WTC11 (cell line): ENCODE measurements at regions of chr7 and their contacts with region 1.

Region 1: GRCh38 chr7:105769901-105770628 is 106.3 kb downstream of the ATXN7L1 start:
- DNase-seq: no peak
- ATAC-seq: no peak
- H3K4me3 Mint-ChIP-seq: no peak overlapping the region
- H3K27ac Mint-ChIP-seq: no peak overlapping the region
- H3K4me1 Mint-ChIP-seq: peaks cover 90% of the 10 kb centered on the region
- H3K27me3 Mint-ChIP-seq: no peaks in the 10 kb centered on the region
- CTCF ChIP-seq: no peak

Region 2: GRCh38 chr7:105743351-105744090 is 26.5 kb before region 1 on chr7:
- CTCF ChIA-PET with region 1: interaction called, 13 read pairs
- POLR2A ChIA-PET with region 1: no interaction called
- DNase-seq: no peak
- ATAC-seq: peak; percentile 52
- H3K4me3 Mint-ChIP-seq: no peak overlapping the region
- H3K27ac Mint-ChIP-seq: no peak overlapping the region
- H3K4me1 Mint-ChIP-seq: peaks cover 38% of the 10 kb centered on the region
- H3K27me3 Mint-ChIP-seq: no peaks in the 10 kb centered on the region
- CTCF ChIP-seq: no peak

Region 3: GRCh38 chr7:105759670-105760550 is 10.2 kb before region 1 on chr7:
- CTCF ChIA-PET with region 1: interaction called, 28 read pairs
- POLR2A ChIA-PET with region 1: interaction called, 4 read pairs
- DNase-seq: peak; percentile 38
- ATAC-seq: no peak; the same call in 1 of the 2 replicates
- H3K4me3 Mint-ChIP-seq: no peak overlapping the region
- H3K27ac Mint-ChIP-seq: peak overlapping the region; percentile 61
- H3K4me1 Mint-ChIP-seq: peaks cover 38% of the 10 kb centered on the region
- H3K27me3 Mint-ChIP-seq: no peaks in the 10 kb centered on the region
- CTCF ChIP-seq: no peak

Region 4: GRCh38 chr7:105806592-105807447 is 36.8 kb after region 1 on chr7:
- CTCF ChIA-PET with region 1: interaction called, 11 read pairs
- POLR2A ChIA-PET with region 1: no interaction called
- DNase-seq: no peak
- ATAC-seq: no peak
- H3K4me3 Mint-ChIP-seq: no peak overlapping the region
- H3K27ac Mint-ChIP-seq: peak overlapping the region; percentile 51; the same call in 1 of the 2 replicates
- H3K4me1 Mint-ChIP-seq: peaks cover 36% of the 10 kb centered on the region
- H3K27me3 Mint-ChIP-seq: no peaks in the 10 kb centered on the region
- CTCF ChIP-seq: no peak

Region 5: DNA sequence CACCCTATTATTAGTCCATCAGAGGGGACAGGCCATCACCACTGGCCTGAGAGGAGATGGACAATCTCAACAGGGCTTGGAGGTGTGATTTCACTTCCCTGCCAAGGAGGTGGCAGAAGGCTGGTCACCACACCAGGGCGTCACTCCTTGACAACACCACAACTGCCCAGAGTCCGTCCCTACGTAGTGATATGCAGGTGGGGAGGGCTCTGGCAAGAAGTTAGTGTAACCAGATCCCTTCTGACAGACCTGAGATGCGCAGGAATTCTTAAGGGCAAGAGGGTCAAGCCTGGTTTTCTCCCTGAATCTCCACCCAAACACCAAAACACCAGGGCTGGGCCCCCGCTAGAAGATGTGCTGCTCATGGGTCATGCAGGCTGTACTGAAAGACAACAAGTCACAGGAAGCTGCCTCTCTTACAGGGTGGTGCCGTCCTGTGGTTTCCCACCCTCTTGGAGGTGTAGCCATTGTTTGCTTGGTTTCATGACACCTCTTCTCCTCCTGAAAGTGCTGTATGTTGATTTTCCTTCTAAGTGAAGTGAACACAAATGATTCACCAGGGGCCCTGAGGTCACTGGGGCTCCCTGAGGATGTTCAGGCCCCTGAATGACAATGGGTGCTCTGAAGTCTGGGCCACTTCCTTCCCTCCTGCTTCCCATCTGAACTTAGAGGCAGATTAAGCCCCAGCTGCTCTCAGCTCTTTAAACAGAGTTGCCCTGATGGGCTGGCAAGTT is 79.2 kb after region 1 on chr7:
- CTCF ChIA-PET with region 1: interaction called, 16 read pairs
- POLR2A ChIA-PET with region 1: no interaction called
- DNase-seq: peak; percentile 56
- ATAC-seq: peak; percentile 90
- H3K4me3 Mint-ChIP-seq: peak overlapping the region; percentile 24
- H3K27ac Mint-ChIP-seq: peak overlapping the region; percentile 89
- H3K4me1 Mint-ChIP-seq: peaks cover 58% of the 10 kb centered on the region
- H3K27me3 Mint-ChIP-seq: no peaks in the 10 kb centered on the region
- CTCF ChIP-seq: no peak